ENCODE measurements at regions of chr20 and their contacts with region 1.

Region 1: DNA sequence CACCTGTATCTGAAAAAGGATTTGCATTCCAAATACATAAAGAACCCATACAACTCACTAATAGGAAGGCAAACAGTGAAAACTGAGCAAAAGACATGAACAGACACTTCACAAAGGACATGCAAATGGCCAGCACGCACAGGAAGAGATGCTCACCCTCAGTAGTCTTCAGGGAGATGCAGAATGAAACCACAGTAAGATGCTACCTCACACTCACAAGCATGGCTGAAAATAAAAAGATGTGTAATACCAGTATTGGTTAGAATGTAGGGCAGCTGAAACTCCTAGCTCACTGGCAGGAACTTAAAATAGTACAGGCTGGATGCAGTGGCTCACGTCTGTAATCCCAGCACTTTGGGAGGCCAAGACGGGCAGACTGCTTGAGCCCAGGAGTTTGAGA is 64.6 kb downstream of the SNX5 start:
- DNase-seq: peak; percentile 52
- CTCF ChIP-seq: no peak

Region 2: DNA sequence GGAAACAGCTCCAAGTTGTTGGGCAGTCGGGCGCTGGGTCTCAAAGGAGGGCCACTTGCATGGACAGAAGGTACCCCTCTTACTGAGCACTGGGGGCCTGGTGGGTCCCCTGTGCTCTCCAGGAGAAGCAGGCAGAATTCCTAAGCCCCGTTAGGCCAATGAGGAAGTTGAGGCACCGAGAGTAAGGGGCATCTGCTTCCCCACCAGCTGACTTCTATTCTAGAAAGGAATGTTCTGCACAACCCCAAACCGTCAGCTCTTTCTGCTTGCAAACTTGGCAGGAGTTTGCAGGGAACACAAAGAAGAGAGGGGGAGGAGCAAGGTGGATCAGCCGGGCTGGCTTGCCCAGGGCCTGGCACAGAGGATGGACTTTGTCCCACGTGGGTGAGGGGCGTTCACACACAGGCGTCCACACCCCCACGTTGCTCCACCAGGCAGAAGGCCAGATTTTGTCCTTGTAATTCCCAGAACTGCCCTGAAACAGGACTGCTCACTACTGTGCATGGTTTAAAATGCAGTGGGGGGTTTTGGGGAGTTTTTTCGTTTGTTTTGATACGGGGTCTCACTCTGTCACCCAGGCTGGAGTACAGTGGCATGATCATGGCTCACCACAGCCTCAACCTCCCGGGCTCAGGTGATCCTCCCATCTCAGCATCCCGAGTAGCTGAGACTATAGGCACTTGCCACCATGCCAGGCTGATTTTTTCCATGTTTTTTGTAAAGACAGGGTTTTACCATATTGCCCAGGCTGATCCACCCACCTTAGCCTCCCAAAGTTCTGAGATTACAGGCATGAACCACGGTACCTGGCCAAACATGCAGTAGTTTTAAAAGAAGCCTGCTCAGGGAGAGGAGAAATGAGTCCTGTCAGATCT is 28.7 kb before region 1 on chr20:
- CTCF ChIA-PET with region 1: no interaction called
- POLR2A ChIA-PET with region 1: no interaction called
- DNase-seq: no peak
- CTCF ChIP-seq: no peak

Region 3: DNA sequence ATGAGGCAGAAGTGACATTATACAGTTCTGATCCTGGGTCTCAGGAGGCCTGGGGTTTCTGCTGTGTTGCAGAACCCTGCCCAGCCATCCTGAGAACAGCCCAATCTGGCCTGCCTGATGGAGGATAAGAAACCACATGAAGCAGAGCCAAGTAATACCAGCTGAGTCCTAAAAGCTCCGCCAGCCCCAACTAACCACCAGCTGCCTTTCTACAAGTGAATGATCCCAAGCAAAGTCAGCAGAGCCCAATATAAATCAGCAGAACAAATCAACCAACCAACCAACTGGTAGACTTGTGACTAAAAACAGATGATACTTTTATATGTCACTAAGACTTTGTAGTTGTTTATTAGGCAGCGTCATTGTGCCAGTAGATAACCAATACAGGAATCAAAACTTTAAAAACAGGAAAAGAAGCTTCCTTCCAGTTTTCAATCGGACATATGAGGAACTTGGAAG is 12.4 kb after region 1 on chr20:
- CTCF ChIA-PET with region 1: interaction called, 15 read pairs
- POLR2A ChIA-PET with region 1: no interaction called
- DNase-seq: no peak
- CTCF ChIP-seq: no peak

Measured in GM10248 (cell line).